Ovary (tissue), 10 donors: ENCODE measurements at regions of chr14 and their contacts with region 1.

Region 1: GRCh38 chr14:94175011-94175745 is 1.1 kb downstream of the PPP4R4 start:
- DNase-seq: peak; percentile 60 to 76 (median 72)
- H3K4me3 ChIP-seq: peak overlapping the region; percentile 57
- H3K27ac ChIP-seq: peak overlapping the region; percentile 78 to 86
- H3K4me1 ChIP-seq: no peaks in the 10 kb centered on the region
- H3K27me3 ChIP-seq: no peaks in the 10 kb centered on the region
- CTCF ChIP-seq: no peak
- EP300 ChIP-seq: no peak
- POLR2A ChIP-seq: no peak

Region 2: DNA sequence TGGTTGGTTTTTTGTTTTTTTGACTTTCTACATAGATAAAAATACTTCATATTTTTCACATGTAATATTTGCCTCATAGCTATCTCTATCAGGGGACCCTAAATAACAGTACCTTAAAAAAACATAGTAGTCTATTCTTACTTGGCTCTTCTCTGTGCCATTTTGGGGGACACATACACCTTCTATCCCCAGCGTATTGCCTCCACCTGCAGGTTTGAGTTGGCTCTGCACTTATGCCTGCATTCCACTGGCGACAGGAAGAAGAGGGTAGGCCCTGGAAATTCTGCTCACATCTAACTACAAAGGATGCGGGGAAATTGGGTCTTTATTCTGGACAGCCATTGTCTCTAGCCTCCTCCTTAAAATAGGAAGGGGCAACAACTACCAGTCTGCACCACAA is 31.9 kb before region 1 on chr14:
- intact Hi-C with region 1: loop called in 2 of 4 experiments (anchors 5 kb)
- DNase-seq: no peak
- H3K4me3 ChIP-seq: no peak overlapping the region
- H3K27ac ChIP-seq: no peak overlapping the region
- H3K4me1 ChIP-seq: no peaks in the 10 kb centered on the region
- H3K27me3 ChIP-seq: no peaks in the 10 kb centered on the region
- CTCF ChIP-seq: no peak
- EP300 ChIP-seq: no peak
- POLR2A ChIP-seq: no peak

Region 3: GRCh38 chr14:94945615-94946014 is 770.4 kb after region 1 on chr14:
- intact Hi-C with region 1: no loop called
- DNase-seq: no peak
- H3K4me3 ChIP-seq: no peak overlapping the region
- H3K27ac ChIP-seq: no peak overlapping the region
- H3K4me1 ChIP-seq: no peaks in the 10 kb centered on the region
- H3K27me3 ChIP-seq: no peaks in the 10 kb centered on the region
- CTCF ChIP-seq: no peak
- EP300 ChIP-seq: no peak
- POLR2A ChIP-seq: no peak